ENCODE measurements at regions of chr2 and their contacts with region 1.

Region 1: GRCh38 chr2:11753886-11754699 is 7.7 kb downstream of the LPIN1 start:
- DNase-seq: peak; percentile 71 to 83
- ATAC-seq: peak; percentile 80 to 81
- H3K4me3 ChIP-seq: peak overlapping the region; percentile 3 to 39 (median 20)
- H3K27ac ChIP-seq: peak overlapping the region; percentile 82 to 95 (median 93)
- H3K4me1 ChIP-seq: peaks cover 78 to 79% of the 10 kb centered on the region in 2 donors
- H3K27me3 ChIP-seq: no peaks in the 10 kb centered on the region
- CTCF ChIP-seq: no peak
- POLR2A ChIP-seq: peak in 1 of 2 donors; percentile 37

Region 2: DNA sequence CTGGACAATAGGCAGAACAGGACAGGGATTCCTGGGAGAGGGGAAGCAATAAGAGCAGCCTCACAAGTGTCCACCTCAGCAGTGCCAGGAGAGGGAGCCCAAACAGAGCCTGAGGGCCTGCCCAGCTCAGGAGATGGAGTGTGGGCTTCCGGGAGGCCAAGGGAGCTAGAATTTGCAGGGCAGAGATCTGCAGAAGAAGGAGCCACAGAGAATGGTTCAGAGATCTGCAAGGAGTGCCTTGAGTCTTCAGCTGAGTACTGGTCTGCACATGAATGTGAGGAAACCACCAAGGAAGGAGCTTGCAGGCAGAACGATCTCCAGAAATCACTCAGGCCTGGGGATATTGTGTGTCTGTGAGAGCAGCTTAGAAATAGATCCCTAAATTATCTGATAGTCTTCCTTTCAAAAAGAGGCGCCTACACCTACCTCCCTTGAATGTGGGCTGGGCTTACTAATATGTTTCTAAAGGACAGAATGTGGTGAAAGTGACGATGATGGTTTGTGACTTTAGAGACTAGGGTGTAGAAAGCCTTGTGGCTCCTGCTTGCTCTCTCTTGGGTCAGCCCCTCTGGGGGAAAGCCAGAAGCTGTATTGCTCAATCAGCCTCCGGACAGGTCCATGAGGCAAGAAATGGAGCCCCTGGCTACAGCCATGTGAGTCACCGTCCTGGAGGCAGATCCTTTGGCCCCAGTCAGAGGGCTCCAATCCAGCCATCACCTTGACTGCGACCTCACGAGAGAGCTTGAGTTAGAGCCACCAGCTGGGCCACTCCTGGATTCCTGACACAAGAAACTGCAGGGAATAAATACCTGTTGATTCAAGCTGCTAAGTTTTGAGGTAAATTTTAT is 15.3 kb before region 1 on chr2:
- in situ Hi-C with region 1: no loop called
- intact Hi-C with region 1: loop called (anchors 1 kb)
- DNase-seq: peak; percentile 96 to 99
- ATAC-seq: peak; percentile 93 to 94
- H3K4me3 ChIP-seq: no peak overlapping the region
- H3K27ac ChIP-seq: peak overlapping the region; percentile 85 to 90 (median 88)
- H3K4me1 ChIP-seq: peaks cover 17 to 23% of the 10 kb centered on the region in 2 donors
- H3K27me3 ChIP-seq: no peaks in the 10 kb centered on the region
- CTCF ChIP-seq: peak; percentile 34 to 60 (median 55)
- POLR2A ChIP-seq: peak in 1 of 2 donors; percentile 37

Region 3: GRCh38 chr2:11822746-11823451 is 68.8 kb after region 1 on chr2:
- in situ Hi-C with region 1: no loop called
- intact Hi-C with region 1: no loop called
- DNase-seq: peak; percentile 83 to 87
- ATAC-seq: peak; percentile 91 to 96
- H3K4me3 ChIP-seq: peak overlapping the region in 1 of 4 donors; percentile 34
- H3K27ac ChIP-seq: peak overlapping the region; percentile 71 to 83 (median 76)
- H3K4me1 ChIP-seq: peaks cover 27 to 34% of the 10 kb centered on the region in 2 donors
- H3K27me3 ChIP-seq: no peaks in the 10 kb centered on the region
- CTCF ChIP-seq: no peak
- POLR2A ChIP-seq: no peak